ENCODE measurements at regions of chr20 and their contacts with region 1.

Region 1: DNA sequence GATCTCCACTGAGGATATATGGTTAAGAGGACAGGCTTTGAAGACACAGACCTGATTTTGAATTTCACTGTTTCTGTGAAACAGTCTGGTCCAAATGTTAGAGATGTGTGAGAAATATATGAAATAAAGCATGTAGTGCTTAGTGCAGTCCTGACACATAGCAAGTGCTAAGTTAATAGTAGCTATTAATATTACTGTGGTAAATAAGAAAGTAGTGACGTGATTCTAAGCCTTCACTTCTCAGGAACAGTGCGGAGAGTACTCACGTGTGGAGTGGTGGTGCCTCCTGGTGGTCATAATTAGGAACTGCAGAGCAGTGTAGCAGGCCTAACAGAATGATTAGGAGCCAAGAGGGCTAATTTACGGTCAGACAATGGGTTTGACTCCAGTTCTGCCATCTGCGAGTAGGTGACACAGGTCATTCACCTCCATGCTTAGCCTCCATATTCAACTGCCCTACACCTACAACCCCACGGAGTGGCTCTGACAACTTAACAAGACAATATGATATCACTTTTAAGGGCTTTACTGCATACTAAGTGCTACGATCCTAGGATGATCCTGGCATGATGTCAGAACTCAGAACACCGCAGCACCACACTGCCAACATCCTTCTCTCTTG is 106.2 kb downstream of the JPH2 start:
- DNase-seq: peak; percentile 68
- H3K4me3 ChIP-seq: no peak overlapping the region
- CTCF ChIP-seq: peak; percentile 96

Region 2: DNA sequence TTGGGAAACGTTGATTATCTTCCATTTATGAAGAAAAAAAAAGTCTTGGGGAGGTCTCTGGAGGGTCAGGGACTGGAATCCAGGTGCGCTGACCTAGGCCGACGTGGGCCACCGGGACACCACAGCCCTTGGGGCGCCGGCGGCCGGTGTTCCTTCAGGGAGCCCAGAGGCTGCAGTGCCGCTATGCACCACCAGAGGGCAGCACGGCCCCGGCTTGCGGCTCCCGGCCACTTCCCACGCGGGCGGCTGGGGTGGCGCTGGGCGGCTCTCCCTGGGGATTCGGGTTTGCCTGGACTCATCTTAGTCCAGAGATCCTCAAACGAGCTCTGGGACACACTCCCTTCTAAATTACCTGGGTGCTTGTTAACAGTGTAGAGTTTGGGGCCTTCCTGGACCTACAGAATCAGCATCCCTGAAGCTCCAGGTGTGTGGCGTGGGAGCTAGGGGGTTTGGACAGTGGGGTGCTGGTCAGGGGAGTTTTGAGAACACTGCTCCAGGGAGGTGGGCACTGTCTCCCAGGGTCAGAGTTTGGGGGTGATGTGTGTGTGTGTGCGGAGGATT is 330.9 kb before region 1 on chr20:
- in situ Hi-C with region 1: loop called (anchors 25 kb)
- DNase-seq: no peak
- H3K4me3 ChIP-seq: no peak overlapping the region
- CTCF ChIP-seq: peak; percentile 99

Region 3: DNA sequence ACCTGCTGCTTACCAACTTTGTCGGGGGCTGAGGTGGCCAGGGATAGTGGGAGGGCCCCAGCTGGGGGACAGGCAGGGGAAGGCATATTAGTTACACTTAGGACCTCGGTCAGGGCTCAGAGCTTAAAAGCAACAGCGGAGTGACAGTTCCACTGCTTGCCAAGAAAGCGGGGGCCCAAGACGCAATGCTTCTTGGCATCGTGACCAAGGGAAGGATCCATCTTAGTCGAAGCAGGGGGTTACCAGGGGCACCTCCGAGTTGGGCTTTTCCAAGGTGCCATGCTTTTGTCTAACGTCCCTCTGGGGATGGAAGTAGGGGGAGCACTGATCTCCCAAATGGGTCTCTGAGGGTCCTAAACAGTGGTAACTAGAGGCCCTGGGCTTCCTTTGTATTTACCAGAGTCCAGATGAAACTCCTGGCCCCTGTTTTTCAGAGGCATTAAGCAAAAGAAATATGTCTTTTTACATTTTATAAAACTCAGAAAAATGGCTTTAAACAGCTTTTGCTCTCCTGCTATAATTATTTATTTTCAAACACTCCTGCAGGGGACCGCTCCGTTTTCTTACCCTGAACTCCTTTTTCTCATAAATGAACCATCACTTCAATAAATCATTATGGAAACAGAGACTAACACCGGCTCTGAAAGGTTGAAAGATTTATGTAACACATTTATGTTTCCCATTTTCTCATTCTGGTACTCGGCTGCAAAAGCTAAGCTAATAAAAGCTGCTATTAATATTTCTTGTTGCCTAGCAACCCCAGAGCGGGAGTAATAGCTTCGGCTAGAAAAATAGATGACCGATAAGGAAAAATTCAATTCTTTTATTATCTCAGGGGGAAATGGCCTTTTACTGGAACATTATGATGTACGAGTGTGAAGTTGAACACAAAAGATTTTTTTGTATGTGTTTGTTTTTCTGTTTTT is 65.7 kb before region 1 on chr20:
- in situ Hi-C with region 1: no loop called
- DNase-seq: no peak
- H3K4me3 ChIP-seq: no peak overlapping the region
- CTCF ChIP-seq: no peak